ENCODE measurements at regions of chr20 and their contacts with region 1.

Region 1: GRCh38 chr20:31723319-31724078 is 831 bp upstream of the BCL2L1 start:
- DNase-seq: peak; percentile 97 to 100 (median 98)
- H3K4me3 ChIP-seq: peak overlapping the region; percentile 92 to 99
- H3K4me3 Mint-ChIP-seq: peak overlapping the region; percentile 89 to 97 (median 94)
- H3K27ac ChIP-seq: peak overlapping the region; percentile 96
- H3K27ac Mint-ChIP-seq: peak overlapping the region; percentile 91 to 98 (median 96)
- H3K4me1 ChIP-seq: peaks cover 31% of the 10 kb centered on the region
- H3K4me1 Mint-ChIP-seq: peaks cover 31 to 46% (median 38%) of the 10 kb centered on the region in 4 donors
- H3K27me3 ChIP-seq: no peaks in the 10 kb centered on the region
- H3K27me3 Mint-ChIP-seq: no peaks in the 10 kb centered on the region

Region 2: GRCh38 chr20:31406115-31406514 is 317.4 kb before region 1 on chr20 and contains the start of gene DEFB121:
- CTCF ChIA-PET with region 1: no interaction called
- POLR2A ChIA-PET with region 1: no interaction called
- intact Hi-C with region 1: no loop called
- DNase-seq: no peak
- H3K4me3 ChIP-seq: no peak within 1 kb of the TSS
- H3K4me3 Mint-ChIP-seq: no peak within 1 kb of the TSS
- H3K27ac ChIP-seq: no peak within 1 kb of the TSS
- H3K27ac Mint-ChIP-seq: peak within 1 kb of the TSS in 1 of 7 donors; percentile 1
- H3K4me1 ChIP-seq: no peaks in the 10 kb centered on the region
- H3K4me1 Mint-ChIP-seq: no peaks in the 10 kb centered on the region
- H3K27me3 ChIP-seq: no peaks in the 10 kb centered on the region
- H3K27me3 Mint-ChIP-seq: peaks cover 4 to 8% of the 10 kb centered on the region in 2 donors
- total RNA-seq, gene DEFB121: not detected

Region 3: GRCh38 chr20:31430568-31431115 is 292.9 kb before region 1 on chr20:
- CTCF ChIA-PET with region 1: no interaction called
- POLR2A ChIA-PET with region 1: no interaction called
- intact Hi-C with region 1: no loop called
- DNase-seq: no peak
- H3K4me3 ChIP-seq: no peak overlapping the region
- H3K4me3 Mint-ChIP-seq: no peak overlapping the region
- H3K27ac ChIP-seq: no peak overlapping the region
- H3K27ac Mint-ChIP-seq: no peak overlapping the region
- H3K4me1 ChIP-seq: no peaks in the 10 kb centered on the region
- H3K4me1 Mint-ChIP-seq: no peaks in the 10 kb centered on the region
- H3K27me3 ChIP-seq: no peaks in the 10 kb centered on the region
- H3K27me3 Mint-ChIP-seq: peaks cover 17 to 19% of the 10 kb centered on the region in 2 donors

Region 4: GRCh38 chr20:31547017-31547675 is 176.4 kb before region 1 on chr20:
- CTCF ChIA-PET with region 1: no interaction called
- POLR2A ChIA-PET with region 1: no interaction called
- intact Hi-C with region 1: loop called (anchors 5 kb)
- DNase-seq: peak; percentile 80 to 88 (median 82)
- H3K4me3 ChIP-seq: peak overlapping the region; percentile 45 to 62
- H3K4me3 Mint-ChIP-seq: peak overlapping the region; percentile 89 to 96 (median 94)
- H3K27ac ChIP-seq: peak overlapping the region; percentile 87
- H3K27ac Mint-ChIP-seq: peak overlapping the region; percentile 97 to 100 (median 99)
- H3K4me1 ChIP-seq: peaks cover 21% of the 10 kb centered on the region
- H3K4me1 Mint-ChIP-seq: peaks cover 12 to 32% (median 21%) of the 10 kb centered on the region in 4 donors
- H3K27me3 ChIP-seq: no peaks in the 10 kb centered on the region
- H3K27me3 Mint-ChIP-seq: no peaks in the 10 kb centered on the region

Region 5: DNA sequence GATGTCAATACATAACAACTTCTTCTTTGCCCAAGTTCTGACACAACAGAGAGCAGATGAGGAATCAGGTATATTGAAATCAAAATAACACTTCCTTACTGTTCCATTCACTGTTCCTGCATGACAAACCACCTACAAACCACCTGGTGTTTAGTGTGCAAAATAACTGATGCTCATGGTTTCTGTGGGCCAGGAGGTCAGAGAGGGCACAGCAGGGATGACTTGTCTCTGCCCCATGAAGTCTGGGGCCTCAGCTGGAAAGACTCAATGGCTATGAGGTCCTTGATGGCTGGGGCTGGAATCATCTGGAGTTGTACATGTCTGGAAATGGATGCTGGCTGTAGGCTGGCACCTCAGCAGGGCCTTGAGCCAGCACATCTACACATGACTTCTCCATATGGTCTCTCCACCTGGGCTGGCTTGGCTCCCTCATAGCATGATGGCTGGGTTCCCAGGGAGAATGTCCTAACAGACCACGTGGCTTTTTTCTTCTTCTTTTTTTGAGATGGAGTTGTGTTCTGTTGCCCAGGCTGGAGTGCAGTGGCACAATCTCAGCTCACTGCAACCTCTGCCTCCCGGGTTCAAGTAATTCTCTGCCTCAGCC is 93.2 kb before region 1 on chr20:
- CTCF ChIA-PET with region 1: interaction called, 47 read pairs
- POLR2A ChIA-PET with region 1: interaction called, 7 read pairs
- intact Hi-C with region 1: loop called (anchors 1 kb)
- DNase-seq: no peak
- H3K4me3 ChIP-seq: no peak overlapping the region
- H3K4me3 Mint-ChIP-seq: no peak overlapping the region
- H3K27ac ChIP-seq: no peak overlapping the region
- H3K27ac Mint-ChIP-seq: no peak overlapping the region
- H3K4me1 ChIP-seq: no peaks in the 10 kb centered on the region
- H3K4me1 Mint-ChIP-seq: no peaks in the 10 kb centered on the region
- H3K27me3 ChIP-seq: no peaks in the 10 kb centered on the region
- H3K27me3 Mint-ChIP-seq: no peaks in the 10 kb centered on the region

Region 6: GRCh38 chr20:31684153-31685015 is 39.1 kb before region 1 on chr20:
- CTCF ChIA-PET with region 1: interaction called, 94 read pairs
- POLR2A ChIA-PET with region 1: interaction called, 19 read pairs
- intact Hi-C with region 1: no loop called
- DNase-seq: peak; percentile 32 to 68 (median 45)
- H3K4me3 ChIP-seq: no peak overlapping the region
- H3K4me3 Mint-ChIP-seq: peak overlapping the region in 7 of 8 donors; percentile 43 to 71 (median 53)
- H3K27ac ChIP-seq: peak overlapping the region; percentile 8
- H3K27ac Mint-ChIP-seq: peak overlapping the region; percentile 76 to 97 (median 89)
- H3K4me1 ChIP-seq: peaks cover 91% of the 10 kb centered on the region
- H3K4me1 Mint-ChIP-seq: peaks cover 55 to 92% (median 68%) of the 10 kb centered on the region in 4 donors
- H3K27me3 ChIP-seq: no peaks in the 10 kb centered on the region
- H3K27me3 Mint-ChIP-seq: no peaks in the 10 kb centered on the region

Region 7: DNA sequence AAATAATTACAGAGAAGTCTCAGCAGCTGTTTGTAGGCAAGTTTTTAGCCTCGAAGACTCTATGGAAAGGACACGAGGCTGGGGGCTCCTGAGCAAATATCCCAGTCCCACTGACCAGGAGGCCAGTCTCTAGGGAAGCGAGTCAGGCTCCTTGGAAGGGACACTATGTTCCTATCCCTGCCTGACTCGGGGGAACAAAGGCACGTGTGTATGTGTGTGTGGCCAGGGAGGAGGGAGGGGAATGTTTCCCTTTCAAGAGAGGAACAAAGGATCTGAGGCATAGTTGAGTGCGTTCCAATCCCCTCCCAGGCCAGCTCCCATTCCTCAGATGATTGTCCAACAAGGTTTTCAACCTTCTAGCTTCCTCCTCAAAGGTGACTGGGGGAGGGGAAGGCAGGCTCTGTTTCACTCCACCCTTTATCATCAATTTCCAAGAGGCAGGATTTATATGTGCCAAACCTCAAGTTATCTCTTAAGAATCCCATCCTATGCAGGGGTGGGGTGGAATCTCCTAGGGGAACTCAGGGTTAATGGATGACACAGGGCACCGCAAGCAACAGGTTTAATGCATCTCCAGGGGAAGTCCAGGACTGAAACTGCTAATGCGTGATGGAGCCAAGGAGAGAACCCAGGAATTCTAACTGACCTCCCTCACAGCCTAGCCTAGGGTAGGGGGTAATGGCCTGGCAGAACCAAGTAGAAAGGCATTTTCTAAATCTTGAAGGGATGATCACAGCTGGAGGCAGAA is 10.8 kb before region 1 on chr20:
- CTCF ChIA-PET with region 1: interaction called, 31 read pairs
- POLR2A ChIA-PET with region 1: interaction called, 12 read pairs
- intact Hi-C with region 1: loop called (anchors 1 kb)
- DNase-seq: no peak
- H3K4me3 ChIP-seq: no peak overlapping the region
- H3K4me3 Mint-ChIP-seq: peak overlapping the region in 4 of 8 donors; percentile 27 to 52 (median 49)
- H3K27ac ChIP-seq: no peak overlapping the region
- H3K27ac Mint-ChIP-seq: peak overlapping the region; percentile 63 to 91 (median 80)
- H3K4me1 ChIP-seq: peaks cover 93% of the 10 kb centered on the region
- H3K4me1 Mint-ChIP-seq: peaks cover 70 to 98% (median 87%) of the 10 kb centered on the region in 4 donors
- H3K27me3 ChIP-seq: no peaks in the 10 kb centered on the region
- H3K27me3 Mint-ChIP-seq: no peaks in the 10 kb centered on the region

Region 8: DNA sequence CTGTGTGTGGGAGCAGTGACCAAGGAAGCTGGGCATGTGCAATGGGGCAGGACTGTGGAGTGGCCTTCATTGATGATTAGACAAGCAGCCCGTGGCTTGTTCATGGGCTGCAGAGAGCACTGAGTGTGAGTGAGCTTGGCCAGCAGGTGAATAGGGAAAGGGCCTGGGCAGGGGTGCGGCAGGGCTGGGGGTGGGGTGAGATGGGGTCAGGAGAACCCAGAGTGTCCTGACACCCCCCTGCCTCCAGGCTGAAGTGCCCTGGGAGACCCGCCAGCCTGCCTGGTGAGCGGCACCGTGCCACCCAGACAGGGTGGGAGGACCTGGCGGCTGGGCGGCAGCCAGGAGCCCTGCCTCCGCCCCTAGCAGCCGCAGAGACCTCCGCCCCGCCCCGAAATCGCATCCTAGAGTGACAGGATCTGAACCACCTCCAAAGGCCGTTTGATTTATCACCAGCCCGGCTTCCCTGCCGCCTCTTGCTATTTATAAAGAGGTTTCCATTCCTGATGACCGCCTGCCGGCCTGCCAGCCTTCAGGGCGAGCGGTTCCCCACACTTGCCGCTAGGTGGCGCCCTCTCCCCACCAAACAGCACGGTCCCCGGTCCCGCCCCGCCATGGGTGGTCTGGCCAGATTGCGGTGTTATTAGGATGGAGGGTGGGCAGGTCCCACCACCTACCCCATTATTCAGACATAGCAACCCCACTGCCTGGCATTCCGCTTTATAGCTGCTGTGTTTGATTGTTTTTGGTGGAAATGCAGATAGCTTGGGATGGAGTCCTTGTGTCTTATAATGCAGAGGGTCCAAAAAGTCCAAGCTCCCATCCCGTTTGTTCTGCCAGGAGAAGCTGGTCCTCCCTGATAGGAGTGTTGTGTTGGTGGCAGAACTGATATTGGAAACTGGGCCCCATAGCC is 99.2 kb after region 1 on chr20:
- CTCF ChIA-PET with region 1: no interaction called
- POLR2A ChIA-PET with region 1: no interaction called
- intact Hi-C with region 1: no loop called
- DNase-seq: peak; percentile 59 to 74 (median 63)
- H3K4me3 ChIP-seq: no peak overlapping the region
- H3K4me3 Mint-ChIP-seq: peak overlapping the region in 4 of 8 donors; percentile 20 to 52 (median 44)
- H3K27ac ChIP-seq: no peak overlapping the region
- H3K27ac Mint-ChIP-seq: peak overlapping the region in 1 of 7 donors; percentile 43
- H3K4me1 ChIP-seq: no peaks in the 10 kb centered on the region
- H3K4me1 Mint-ChIP-seq: peaks cover 0 to 7% (median 6%) of the 10 kb centered on the region in 4 donors
- H3K27me3 ChIP-seq: no peaks in the 10 kb centered on the region
- H3K27me3 Mint-ChIP-seq: peaks cover 0 to 2% of the 10 kb centered on the region in 2 donors

Region 9: GRCh38 chr20:31987744-31988143 is 264.2 kb after region 1 on chr20:
- CTCF ChIA-PET with region 1: no interaction called
- POLR2A ChIA-PET with region 1: no interaction called
- intact Hi-C with region 1: no loop called
- DNase-seq: no peak
- H3K4me3 ChIP-seq: no peak overlapping the region
- H3K4me3 Mint-ChIP-seq: no peak overlapping the region
- H3K27ac ChIP-seq: no peak overlapping the region
- H3K27ac Mint-ChIP-seq: no peak overlapping the region
- H3K4me1 ChIP-seq: no peaks in the 10 kb centered on the region
- H3K4me1 Mint-ChIP-seq: peaks cover 0 to 6% (median 0%) of the 10 kb centered on the region in 4 donors
- H3K27me3 ChIP-seq: no peaks in the 10 kb centered on the region
- H3K27me3 Mint-ChIP-seq: peaks cover 3 to 6% of the 10 kb centered on the region in 2 donors

Measured in CD4-positive, alpha-beta memory T cell (primary cell).